HepG2 (cell line): ENCODE measurements at regions of chr5 and their contacts with region 1.

Region 1: DNA sequence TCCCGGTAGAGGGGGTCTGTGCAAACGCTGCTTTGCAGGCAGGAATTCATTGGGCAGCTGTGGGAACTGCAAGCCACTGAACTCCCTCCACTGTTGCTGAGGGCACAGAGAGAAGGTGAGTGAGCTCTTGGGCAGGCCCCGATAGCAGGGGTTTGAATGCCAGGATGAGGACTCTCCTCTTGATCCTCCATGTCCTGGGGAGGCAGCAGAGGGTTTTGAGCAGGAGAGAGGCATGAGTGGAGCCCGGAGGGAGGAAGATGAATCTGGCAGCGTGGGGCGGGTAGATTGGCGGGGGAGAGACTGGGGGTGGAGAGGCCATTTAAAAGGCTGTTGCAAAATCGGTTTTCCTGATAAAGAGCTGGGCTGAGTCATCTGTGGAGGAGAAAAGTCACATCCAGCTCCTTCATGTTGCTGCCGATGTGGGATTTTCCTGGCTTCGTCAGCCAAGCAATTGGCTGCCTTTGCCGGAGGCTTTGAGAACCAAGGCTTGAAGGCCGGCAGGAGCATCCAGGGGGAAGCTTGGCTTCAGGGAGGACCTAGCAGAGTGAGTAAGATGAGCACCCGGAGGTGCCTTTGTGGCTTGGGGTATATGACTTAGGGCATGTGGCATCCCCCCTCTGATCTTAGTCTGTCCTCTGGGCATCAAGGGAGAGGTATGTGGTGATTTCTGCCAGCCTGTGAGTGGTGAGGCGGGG is at the start of gene SYNPO:
- DNase-seq: peak; percentile 25
- ATAC-seq: peak; percentile 11
- H3K4me3 ChIP-seq: peak within 1 kb of the TSS; percentile 4 to 39 (median 27); a peak in 2 of 6 replicates
- H3K27ac ChIP-seq: no peak within 1 kb of the TSS
- H3K4me1 ChIP-seq: peaks cover 87% of the 10 kb centered on the region
- H3K27me3 ChIP-seq: 0 out of 5 replicates have a peak, but pooled peaks cover 0 to 3% of the 10 kb centered on the region in 2 experiments
- CTCF ChIP-seq: no peak
- EP300 ChIP-seq: no peak
- POLR2A ChIP-seq: no peak
- RAD21 ChIP-seq: no peak
- total RNA-seq, gene SYNPO: 0.09 and 0.22 TPM in 2 replicates

Region 2: DNA sequence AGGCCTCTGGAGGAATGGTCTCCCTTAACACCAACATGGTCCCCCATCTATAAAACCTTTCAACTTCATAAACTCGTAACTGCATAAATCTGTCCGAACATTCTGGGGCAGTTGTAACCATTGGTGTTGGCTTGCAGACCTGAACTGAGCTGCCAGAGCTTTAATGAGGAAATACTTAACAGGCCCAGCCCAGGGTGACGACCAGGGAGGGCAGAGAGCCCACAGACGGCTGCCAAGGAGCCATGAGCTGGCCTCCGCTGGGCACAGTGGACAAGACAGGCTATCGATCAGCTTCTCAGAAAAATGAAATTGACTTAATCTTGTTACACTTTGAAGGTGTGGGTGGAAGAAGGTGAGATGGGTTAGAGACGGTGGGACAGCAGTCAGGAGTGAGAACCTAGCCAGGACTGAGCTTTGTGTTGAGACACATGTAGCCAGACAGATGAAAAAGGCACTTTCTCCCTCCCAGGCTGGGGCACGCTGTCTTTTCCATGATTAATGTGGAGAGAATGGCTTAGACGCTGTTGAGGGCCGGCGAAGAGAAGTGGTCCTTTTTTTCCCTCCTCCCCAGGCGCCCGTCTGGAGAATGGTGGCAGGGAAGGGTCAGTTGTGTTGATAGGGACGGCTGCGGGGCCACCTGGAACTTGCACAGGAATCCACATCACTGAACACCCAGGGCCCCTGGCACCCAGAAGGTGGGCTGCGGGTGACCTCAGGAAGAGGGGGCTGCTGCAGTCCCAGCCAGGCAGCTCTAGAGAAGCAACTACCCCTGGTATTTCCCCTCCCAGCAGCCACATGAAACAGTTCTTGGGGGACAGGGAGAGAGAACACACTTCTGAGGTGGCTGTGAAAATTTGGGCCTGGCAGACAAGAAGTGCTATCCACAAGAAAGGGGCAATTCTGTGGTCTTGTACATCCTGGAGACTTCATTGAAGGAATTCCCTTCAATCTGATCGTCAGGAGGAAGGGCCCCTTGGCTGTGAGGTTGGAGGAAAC is 310.3 kb before region 1 on chr5:
- CTCF ChIA-PET with region 1: no interaction called
- POLR2A ChIA-PET with region 1: no interaction called
- in situ Hi-C with region 1: no loop called
- intact Hi-C with region 1: loop called (anchors 5 kb)
- DNase-seq: no peak
- ATAC-seq: no peak
- H3K4me3 ChIP-seq: no peak overlapping the region
- H3K27ac ChIP-seq: no peak overlapping the region
- H3K4me1 ChIP-seq: peaks cover 28% of the 10 kb centered on the region
- H3K27me3 ChIP-seq: peaks cover 6 to 18% of the 10 kb centered on the region in 2 experiments; a peak in 3 of 5 replicates
- CTCF ChIP-seq: no peak
- EP300 ChIP-seq: no peak
- POLR2A ChIP-seq: no peak
- RAD21 ChIP-seq: no peak

Region 3: GRCh38 chr5:150458819-150459557 is 181.5 kb before region 1 on chr5:
- CTCF ChIA-PET with region 1: no interaction called
- POLR2A ChIA-PET with region 1: no interaction called
- in situ Hi-C with region 1: no loop called
- intact Hi-C with region 1: loop called (anchors 10 kb)
- DNase-seq: peak; percentile 44
- ATAC-seq: peak; percentile 86
- H3K4me3 ChIP-seq: peak overlapping the region in 2 of 3 experiments; percentile 42 to 62; a peak in 4 of 6 replicates
- H3K27ac ChIP-seq: no peak overlapping the region
- H3K4me1 ChIP-seq: peaks cover 47% of the 10 kb centered on the region
- H3K27me3 ChIP-seq: peaks cover 2 to 7% of the 10 kb centered on the region in 2 experiments; a peak in 1 of 5 replicates
- CTCF ChIP-seq: peak; percentile 92
- EP300 ChIP-seq: no peak
- POLR2A ChIP-seq: no peak
- RAD21 ChIP-seq: peak; percentile 84

Region 4: GRCh38 chr5:150582241-150583109 is 58.0 kb before region 1 on chr5:
- CTCF ChIA-PET with region 1: no interaction called
- POLR2A ChIA-PET with region 1: interaction called, 4 read pairs
- in situ Hi-C with region 1: loop called (anchors 5 kb)
- intact Hi-C with region 1: no loop called
- DNase-seq: peak; percentile 62
- ATAC-seq: peak; percentile 68
- H3K4me3 ChIP-seq: peak overlapping the region; percentile 44 to 60 (median 48); a peak in 5 of 6 replicates
- H3K27ac ChIP-seq: no peak overlapping the region
- H3K4me1 ChIP-seq: peaks cover 59% of the 10 kb centered on the region
- H3K27me3 ChIP-seq: peaks cover 0 to 3% of the 10 kb centered on the region in 2 experiments; a peak in 1 of 5 replicates
- CTCF ChIP-seq: no peak
- EP300 ChIP-seq: peak in 1 of 2 experiments; percentile 52; a peak in 1 of 4 replicates
- POLR2A ChIP-seq: no peak
- RAD21 ChIP-seq: no peak

Region 5: GRCh38 chr5:150758531-150759333 is 118.3 kb after region 1 on chr5 and contains the start of gene DCTN4:
- CTCF ChIA-PET with region 1: no interaction called
- POLR2A ChIA-PET with region 1: no interaction called
- in situ Hi-C with region 1: no loop called
- intact Hi-C with region 1: no loop called
- DNase-seq: peak; percentile 99
- ATAC-seq: peak; percentile 98
- H3K4me3 ChIP-seq: peak within 1 kb of the TSS; percentile 84 to 93 (median 86)
- H3K27ac ChIP-seq: peak within 1 kb of the TSS; percentile 93
- H3K4me1 ChIP-seq: peaks cover 63% of the 10 kb centered on the region
- H3K27me3 ChIP-seq: no peaks in the 10 kb centered on the region
- CTCF ChIP-seq: peak; percentile 40; the same call in 1 of the 2 replicates
- EP300 ChIP-seq: no peak
- POLR2A ChIP-seq: peak; percentile 76 to 77
- RAD21 ChIP-seq: peak; percentile 44; the same call in 1 of the 2 replicates
- total RNA-seq, gene DCTN4: 26.9 and 39.7 TPM in 2 replicates